Left ventricle myocardium superior (tissue), 1 donor: ENCODE measurements at regions of chr4 and their contacts with region 1.

Region 1: DNA sequence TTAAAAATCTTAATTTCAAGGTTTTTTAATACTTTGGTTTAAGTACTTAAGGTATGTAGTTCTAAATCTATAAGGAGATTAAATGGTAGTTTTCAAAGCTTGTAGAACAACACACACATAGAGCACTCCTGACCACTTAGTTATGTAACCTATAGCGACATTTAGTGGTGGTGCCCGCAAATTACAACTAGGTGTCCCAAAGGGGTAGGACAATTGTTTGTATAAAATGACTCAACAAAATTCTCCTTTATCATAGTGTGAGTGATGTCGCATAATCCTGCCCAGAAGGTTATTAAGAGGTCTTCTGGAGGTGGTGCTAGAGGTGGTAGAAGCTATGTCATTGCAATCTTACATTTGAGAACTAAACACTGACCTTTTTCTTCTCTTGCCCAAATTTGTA is 373.0 kb upstream of the RASGEF1B start:
- DNase-seq: peak; percentile 45
- ATAC-seq: peak; percentile 91

Region 2: GRCh38 chr4:81405894-81406401 is 438.8 kb before region 1 on chr4:
- intact Hi-C with region 1: loop called (anchors 10 kb)
- DNase-seq: no peak
- ATAC-seq: peak; percentile 84

Region 3: DNA sequence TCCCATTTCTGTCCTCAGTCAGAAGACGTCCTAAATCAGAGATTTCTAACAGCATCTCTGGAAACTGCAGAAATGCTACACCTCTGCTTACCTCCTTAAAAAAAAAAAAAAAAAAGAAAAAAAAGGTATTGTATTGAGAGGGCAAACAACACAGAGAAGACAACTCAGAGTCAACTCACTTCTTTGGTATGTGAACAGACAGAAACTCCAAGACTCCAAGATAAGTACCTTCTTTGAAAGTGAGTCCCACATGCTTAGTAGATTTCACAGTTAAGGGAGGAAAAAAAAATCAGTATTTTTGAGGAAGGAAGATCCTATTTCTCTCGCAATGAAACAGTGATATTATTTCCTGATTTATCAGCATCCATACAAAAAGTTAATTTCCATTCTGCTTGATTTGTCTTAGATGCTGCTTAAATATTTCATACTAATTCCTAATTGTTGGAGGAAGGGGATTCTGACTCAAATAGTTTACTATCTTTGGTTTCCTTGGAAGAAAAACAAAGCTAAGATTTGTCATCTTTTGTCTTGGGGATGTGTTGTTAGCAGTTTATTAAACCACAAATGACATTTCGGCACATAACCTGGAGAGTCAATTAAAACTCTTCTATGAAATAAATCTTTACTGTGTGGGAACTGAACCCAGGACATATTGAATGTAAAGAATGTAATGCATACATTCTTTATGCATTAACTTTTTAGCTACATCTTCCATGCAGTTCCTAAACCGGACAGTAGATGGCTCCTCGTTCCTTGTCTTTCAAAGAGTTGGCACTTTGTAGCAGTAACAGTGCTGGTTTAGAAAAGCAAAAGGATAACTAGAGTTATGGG is 377.7 kb before region 1 on chr4:
- intact Hi-C with region 1: loop called (anchors 1 kb)
- DNase-seq: no peak
- ATAC-seq: no peak

Region 4: DNA sequence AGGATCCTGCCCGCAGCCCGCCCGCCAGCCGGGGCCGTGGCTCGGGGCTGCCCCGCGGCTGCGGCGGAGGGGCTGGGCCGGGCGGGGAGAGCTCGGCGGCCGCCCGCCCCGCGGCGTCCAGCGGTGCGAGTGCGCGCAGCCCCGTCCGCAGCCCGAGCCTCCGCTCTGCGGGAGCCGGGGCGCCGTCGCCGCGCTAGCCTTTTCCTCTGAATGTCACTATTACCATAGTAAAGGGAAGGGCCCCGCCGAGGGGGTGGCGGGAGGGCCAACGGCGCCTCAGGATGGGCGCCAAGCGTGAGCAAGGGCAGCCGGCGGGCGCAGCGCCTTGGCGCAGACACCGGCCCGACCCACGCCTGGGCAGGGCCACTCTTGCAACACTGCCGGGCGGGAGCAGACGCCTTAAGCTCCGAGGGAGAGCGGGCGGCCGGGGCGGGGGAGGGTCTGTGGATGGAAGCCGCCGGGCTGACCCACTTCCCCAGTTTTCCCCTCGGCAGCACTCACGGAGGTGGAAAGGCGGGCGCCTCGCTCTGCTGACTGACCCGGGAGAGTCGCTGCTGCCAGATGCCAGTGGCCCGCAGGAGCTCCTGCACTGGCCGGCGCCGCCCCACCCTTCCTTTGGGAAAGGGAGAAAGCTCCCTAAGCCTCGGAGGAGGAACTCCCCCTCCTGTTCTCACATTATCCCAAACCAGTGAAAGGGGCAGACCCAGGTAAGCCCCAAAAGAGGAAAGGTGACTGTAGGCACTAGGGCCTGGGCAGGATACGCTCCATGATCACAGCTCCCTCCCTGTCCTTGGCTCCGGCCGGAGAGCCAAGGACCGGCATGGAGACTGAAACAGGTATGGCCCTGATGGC is 199.7 kb after region 1 on chr4:
- intact Hi-C with region 1: no loop called
- DNase-seq: peak; percentile 65
- ATAC-seq: peak; percentile 93